ENCODE measurements at regions of chr17 and their contacts with region 1.

Region 1: DNA sequence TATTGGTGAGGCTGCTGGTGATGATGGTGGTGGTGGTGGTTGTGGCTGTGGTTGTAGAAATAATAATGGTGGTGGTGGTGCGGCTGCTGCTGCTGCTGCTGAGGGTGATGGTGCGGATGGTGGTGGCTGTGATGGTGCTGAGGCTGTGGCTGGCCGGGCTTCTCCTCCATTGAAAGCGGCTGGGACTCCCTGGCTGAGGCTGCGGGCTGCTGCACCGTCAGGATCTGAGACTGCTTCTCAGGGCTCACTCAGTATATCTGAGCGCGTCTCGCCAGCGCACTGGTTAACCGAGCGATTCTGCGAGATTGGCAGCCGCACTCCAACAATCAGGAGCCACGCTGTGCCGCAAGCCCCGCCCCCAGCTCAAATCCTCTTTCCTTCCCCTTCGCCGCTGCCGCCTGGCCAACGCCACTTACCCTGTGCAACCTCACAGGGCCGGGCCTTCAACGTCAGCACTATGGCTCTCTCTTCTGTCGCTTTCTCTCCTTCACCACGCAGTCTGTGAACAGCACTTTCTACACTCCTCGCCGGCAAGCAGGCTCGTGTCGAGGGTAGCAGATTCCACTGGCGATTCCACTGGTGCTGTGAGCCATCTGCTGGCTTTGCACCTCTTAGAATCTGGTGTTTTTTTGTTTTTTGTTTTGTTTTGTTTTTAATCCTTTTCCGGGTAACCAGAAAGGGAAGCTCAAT is at the start of gene NUFIP2:
- DNase-seq: peak; percentile 99
- ATAC-seq: peak; percentile 91
- H3K4me3 Mint-ChIP-seq: peak within 1 kb of the TSS; percentile 100
- H3K27ac Mint-ChIP-seq: peak within 1 kb of the TSS; percentile 100
- H3K4me1 Mint-ChIP-seq: peaks cover 28% of the 10 kb centered on the region
- H3K27me3 Mint-ChIP-seq: no peaks in the 10 kb centered on the region
- CTCF ChIP-seq: no peak
- total RNA-seq, gene NUFIP2: 49.5 to 56.4 TPM

Region 2: GRCh38 chr17:29124117-29124924 is 169.7 kb before region 1 on chr17:
- CTCF ChIA-PET with region 1: interaction called, 10 read pairs
- POLR2A ChIA-PET with region 1: interaction called, 3 read pairs
- intact Hi-C with region 1: no loop called
- DNase-seq: peak; percentile 55
- ATAC-seq: peak; percentile 97
- H3K4me3 Mint-ChIP-seq: no peak overlapping the region
- H3K27ac Mint-ChIP-seq: no peak overlapping the region
- H3K4me1 Mint-ChIP-seq: no peaks in the 10 kb centered on the region
- H3K27me3 Mint-ChIP-seq: no peaks in the 10 kb centered on the region
- CTCF ChIP-seq: peak; percentile 76

Region 3: DNA sequence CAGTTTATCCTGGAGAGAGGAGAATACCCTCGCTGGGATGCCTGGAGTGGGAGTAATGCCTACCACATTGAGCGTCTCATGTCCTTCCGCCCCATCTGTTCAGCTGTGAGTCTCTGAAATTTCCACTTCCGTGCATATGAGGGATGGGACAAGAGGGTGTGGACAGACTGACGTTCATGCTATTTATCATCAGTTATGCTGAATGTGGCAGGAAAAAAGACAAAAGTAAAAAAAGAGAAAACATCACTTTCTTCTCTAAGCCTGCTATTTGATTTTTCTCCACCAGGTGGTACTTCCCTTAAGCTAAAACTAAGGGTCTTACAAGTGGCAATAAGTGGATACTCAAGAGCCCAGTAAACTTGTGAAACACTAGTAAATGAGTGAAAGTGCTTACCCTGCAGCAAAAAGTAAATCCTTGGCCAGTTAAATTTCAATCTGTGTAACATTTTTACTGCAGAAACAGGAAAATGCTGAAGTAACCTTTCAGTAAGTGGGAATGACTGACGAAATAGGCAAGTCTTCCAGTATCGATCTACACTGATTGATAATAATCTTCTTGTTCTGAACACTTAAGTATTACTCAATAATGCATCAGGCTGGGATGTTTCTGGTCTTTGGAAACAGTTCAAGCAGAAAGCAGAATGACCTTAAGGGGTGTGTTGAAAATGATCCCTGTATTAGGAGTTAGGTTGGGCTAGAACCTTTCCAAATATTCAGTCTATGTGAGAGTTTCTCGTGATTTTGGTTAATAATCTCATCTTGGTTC is 41.8 kb before region 1 on chr17:
- CTCF ChIA-PET with region 1: interaction called, 10 read pairs
- POLR2A ChIA-PET with region 1: interaction called, 8 read pairs
- intact Hi-C with region 1: no loop called
- DNase-seq: no peak
- ATAC-seq: no peak
- H3K4me3 Mint-ChIP-seq: no peak overlapping the region
- H3K27ac Mint-ChIP-seq: no peak overlapping the region
- H3K4me1 Mint-ChIP-seq: peaks cover 7% of the 10 kb centered on the region
- H3K27me3 Mint-ChIP-seq: no peaks in the 10 kb centered on the region
- CTCF ChIP-seq: peak; percentile 32

Region 4: GRCh38 chr17:29279397-29280070 is 14.5 kb before region 1 on chr17:
- CTCF ChIA-PET with region 1: interaction called, 9 read pairs
- POLR2A ChIA-PET with region 1: interaction called, 12 read pairs
- intact Hi-C with region 1: no loop called
- DNase-seq: no peak
- ATAC-seq: no peak
- H3K4me3 Mint-ChIP-seq: no peak overlapping the region
- H3K27ac Mint-ChIP-seq: no peak overlapping the region
- H3K4me1 Mint-ChIP-seq: peaks cover 53% of the 10 kb centered on the region
- H3K27me3 Mint-ChIP-seq: no peaks in the 10 kb centered on the region
- CTCF ChIP-seq: no peak

Region 5: DNA sequence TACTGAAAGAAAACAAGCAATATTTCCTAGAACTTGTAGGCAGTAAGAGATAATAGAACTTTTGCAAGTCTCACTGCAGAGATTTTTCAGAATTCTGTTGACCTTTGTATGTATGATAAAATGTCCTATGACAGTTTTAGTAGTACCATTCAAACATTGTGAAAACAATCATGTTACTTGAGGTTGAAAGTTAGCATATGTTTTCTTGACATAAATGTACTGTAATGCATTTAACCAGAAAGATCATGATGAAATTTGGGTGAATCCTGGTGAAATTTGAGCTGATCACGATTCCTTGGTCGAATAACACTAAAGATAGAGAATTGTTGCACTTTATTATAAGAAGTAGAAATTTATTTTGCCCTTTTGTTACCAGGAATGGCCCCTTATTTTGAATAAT is 181.9 kb after region 1 on chr17:
- CTCF ChIA-PET with region 1: no interaction called
- POLR2A ChIA-PET with region 1: no interaction called
- intact Hi-C with region 1: no loop called
- DNase-seq: no peak
- ATAC-seq: no peak
- H3K4me3 Mint-ChIP-seq: no peak overlapping the region
- H3K27ac Mint-ChIP-seq: no peak overlapping the region
- H3K4me1 Mint-ChIP-seq: no peaks in the 10 kb centered on the region
- H3K27me3 Mint-ChIP-seq: no peaks in the 10 kb centered on the region
- CTCF ChIP-seq: no peak

Measured in activated CD8-positive, alpha-beta T cell treated with anti-CD3 and anti-CD28 coated beads for 36 hours (primary cell).